ENCODE measurements at regions of chr11 and their contacts with region 1.

Region 1: DNA sequence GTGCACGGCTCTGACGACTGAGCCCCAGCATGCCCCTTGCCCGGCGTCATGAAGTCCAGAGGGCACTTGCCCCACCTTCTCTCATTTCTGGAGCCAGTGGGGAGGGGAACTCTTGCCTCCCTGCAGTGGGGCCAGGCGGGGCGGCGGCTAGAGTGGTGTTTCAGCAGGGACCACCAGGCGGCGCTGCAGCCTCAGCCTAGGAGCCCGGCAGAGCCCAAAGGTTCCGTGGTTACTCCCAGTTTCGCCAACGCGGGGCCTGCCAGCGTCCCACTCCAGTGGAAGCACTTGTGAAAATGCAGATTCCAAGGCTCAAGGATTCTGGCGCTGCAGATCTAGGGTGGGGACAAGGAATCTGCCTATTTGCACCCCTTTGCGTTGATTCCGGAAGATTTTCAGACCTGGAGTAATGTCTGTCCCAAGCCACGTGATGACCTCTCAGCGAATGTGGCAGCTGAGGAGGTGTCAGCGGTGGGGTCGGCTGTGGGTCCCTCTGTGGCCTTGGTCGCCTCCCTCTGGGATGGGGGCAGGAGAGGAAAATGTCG is 55.7 kb downstream of the CD82 start:
- DNase-seq: peak; percentile 87
- ATAC-seq: peak; percentile 75

Region 2: GRCh38 chr11:44574610-44575287 is 46.5 kb before region 1 on chr11:
- intact Hi-C with region 1: no loop called
- DNase-seq: no peak
- ATAC-seq: no peak

Region 3: GRCh38 chr11:44596525-44597276 is 24.5 kb before region 1 on chr11:
- intact Hi-C with region 1: no loop called
- DNase-seq: no peak
- ATAC-seq: peak; percentile 4

Region 4: GRCh38 chr11:44911029-44911814 is 290.0 kb after region 1 on chr11:
- intact Hi-C with region 1: loop called (anchors 5 kb)
- DNase-seq: peak; percentile 78
- ATAC-seq: peak; percentile 82